K562 (cell line): ENCODE measurements at regions of chr2 and their contacts with region 1.

Region 1: DNA sequence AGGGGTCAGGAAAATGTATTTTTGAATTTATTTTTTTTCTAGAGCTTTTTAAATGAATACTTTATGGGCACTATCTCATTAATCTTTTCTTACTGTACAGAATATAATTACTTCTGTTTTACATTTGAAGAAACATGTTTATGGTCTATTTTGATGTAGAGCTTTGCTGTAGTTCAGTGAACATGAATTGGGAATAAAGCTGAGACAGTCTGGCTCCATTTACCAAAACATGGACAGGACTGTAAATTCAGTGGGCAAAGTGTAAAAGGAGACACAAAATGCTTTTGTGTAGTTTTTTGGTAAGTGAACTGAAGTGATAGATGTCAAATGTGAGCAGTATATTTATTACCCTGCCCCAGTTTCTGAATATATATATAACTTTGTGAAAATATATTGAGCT is 1298.8 kb upstream of the NXPH2 start:
- DNase-seq: no peak
- ATAC-seq: no peak
- H3K4me3 ChIP-seq: no peak overlapping the region
- H3K27ac ChIP-seq: no peak overlapping the region
- H3K4me1 ChIP-seq: no peaks in the 10 kb centered on the region
- H3K27me3 ChIP-seq: no peaks in the 10 kb centered on the region
- CTCF ChIP-seq: no peak
- EP300 ChIP-seq: no peak
- POLR2A ChIP-seq: no peak
- RAD21 ChIP-seq: no peak

Region 2: GRCh38 chr2:140091926-140092325 is 12.9 kb after region 1 on chr2:
- CTCF ChIA-PET with region 1: no interaction called
- POLR2A ChIA-PET with region 1: no interaction called
- in situ Hi-C with region 1: no loop called
- intact Hi-C with region 1: loop called (anchors 1 kb)
- DNase-seq: no peak
- ATAC-seq: no peak
- H3K4me3 ChIP-seq: no peak overlapping the region
- H3K27ac ChIP-seq: no peak overlapping the region
- H3K4me1 ChIP-seq: no peaks in the 10 kb centered on the region
- H3K27me3 ChIP-seq: no peaks in the 10 kb centered on the region
- CTCF ChIP-seq: no peak
- EP300 ChIP-seq: no peak
- POLR2A ChIP-seq: no peak
- RAD21 ChIP-seq: no peak

Region 3: GRCh38 chr2:140308706-140309105 is 229.7 kb after region 1 on chr2:
- CTCF ChIA-PET with region 1: no interaction called
- POLR2A ChIA-PET with region 1: no interaction called
- in situ Hi-C with region 1: no loop called
- intact Hi-C with region 1: no loop called
- DNase-seq: no peak
- ATAC-seq: no peak
- H3K4me3 ChIP-seq: no peak overlapping the region
- H3K27ac ChIP-seq: no peak overlapping the region
- H3K4me1 ChIP-seq: no peaks in the 10 kb centered on the region
- H3K27me3 ChIP-seq: no peaks in the 10 kb centered on the region
- CTCF ChIP-seq: no peak
- EP300 ChIP-seq: no peak
- POLR2A ChIP-seq: no peak
- RAD21 ChIP-seq: no peak